ENCODE measurements at regions of chr2 and their contacts with region 1.

Region 1: GRCh38 chr2:43070039-43070438 is 156.4 kb downstream of the ZFP36L2 start:
- DNase-seq: peak; percentile 94 to 98
- H3K4me3 ChIP-seq: no peak overlapping the region
- H3K27ac ChIP-seq: peak overlapping the region; percentile 93
- H3K4me1 ChIP-seq: peaks cover 84% of the 10 kb centered on the region
- H3K27me3 ChIP-seq: no peaks in the 10 kb centered on the region
- CTCF ChIP-seq: no peak; the same call in 1 of the 2 replicates

Region 2: DNA sequence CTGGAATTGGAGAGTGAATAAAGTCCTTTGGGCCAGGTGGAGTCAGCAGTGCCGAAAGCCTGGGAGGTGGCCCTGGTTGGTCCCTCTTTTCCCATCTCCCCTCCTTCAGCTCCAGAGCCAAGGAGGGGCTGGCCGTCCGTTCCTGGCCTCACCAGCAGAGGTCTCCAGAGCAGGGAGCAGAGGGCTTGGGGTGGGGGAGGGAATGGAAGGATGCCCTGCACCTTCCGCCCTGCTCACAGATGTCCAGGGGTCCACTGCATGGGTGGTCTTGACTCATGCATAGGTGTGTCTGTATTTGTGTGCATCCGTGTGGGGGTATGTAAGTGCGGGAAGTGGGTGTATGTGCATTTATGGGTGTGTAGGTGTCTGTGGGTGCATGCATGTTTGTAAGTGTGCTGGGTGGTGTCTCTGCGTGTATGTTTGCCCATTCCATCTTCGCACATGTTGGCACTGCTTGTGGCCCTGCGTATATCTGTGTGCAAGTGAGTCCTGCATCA is 45.5 kb before region 1 on chr2:
- CTCF ChIA-PET with region 1: interaction called, 3 read pairs
- POLR2A ChIA-PET with region 1: no interaction called
- intact Hi-C with region 1: loop called (anchors 1 kb)
- DNase-seq: peak in 1 of 2 experiments; percentile 67
- H3K4me3 ChIP-seq: no peak overlapping the region
- H3K27ac ChIP-seq: no peak overlapping the region
- H3K4me1 ChIP-seq: peaks cover 19% of the 10 kb centered on the region; the same call in 1 of the 2 replicates
- H3K27me3 ChIP-seq: no peaks in the 10 kb centered on the region
- CTCF ChIP-seq: peak; percentile 90

Region 3: GRCh38 chr2:43041661-43042360 is 28.2 kb before region 1 on chr2:
- CTCF ChIA-PET with region 1: interaction called, 20 read pairs
- POLR2A ChIA-PET with region 1: interaction called, 8 read pairs
- intact Hi-C with region 1: loop called (anchors 1 kb)
- DNase-seq: peak; percentile 93 to 95
- H3K4me3 ChIP-seq: peak overlapping the region; percentile 19; the same call in 1 of the 2 replicates
- H3K27ac ChIP-seq: peak overlapping the region; percentile 90
- H3K4me1 ChIP-seq: peaks cover 79% of the 10 kb centered on the region
- H3K27me3 ChIP-seq: no peaks in the 10 kb centered on the region
- CTCF ChIP-seq: no peak

Region 4: GRCh38 chr2:43056816-43057741 is 13.0 kb before region 1 on chr2:
- CTCF ChIA-PET with region 1: interaction called, 3 read pairs
- POLR2A ChIA-PET with region 1: no interaction called
- intact Hi-C with region 1: loop called (anchors 1 kb)
- DNase-seq: peak; percentile 50 to 71
- H3K4me3 ChIP-seq: no peak overlapping the region
- H3K27ac ChIP-seq: no peak overlapping the region
- H3K4me1 ChIP-seq: peaks cover 31% of the 10 kb centered on the region
- H3K27me3 ChIP-seq: no peaks in the 10 kb centered on the region
- CTCF ChIP-seq: no peak

Region 5: GRCh38 chr2:43941966-43942365 is 871.9 kb after region 1 on chr2:
- CTCF ChIA-PET with region 1: no interaction called
- POLR2A ChIA-PET with region 1: interaction called, 16 read pairs
- intact Hi-C with region 1: no loop called
- DNase-seq: no peak
- H3K4me3 ChIP-seq: no peak overlapping the region
- H3K27ac ChIP-seq: no peak overlapping the region
- H3K4me1 ChIP-seq: no peaks in the 10 kb centered on the region
- H3K27me3 ChIP-seq: no peaks in the 10 kb centered on the region
- CTCF ChIP-seq: no peak